ENCODE measurements at regions of chr15 and their contacts with region 1.

Region 1: GRCh38 chr15:69064649-69065048 is 50.2 kb downstream of the NOX5 start:
- DNase-seq: no peak
- H3K4me3 ChIP-seq: no peak overlapping the region
- H3K27ac ChIP-seq: no peak overlapping the region
- H3K4me1 ChIP-seq: no peaks in the 10 kb centered on the region
- H3K27me3 ChIP-seq: no peaks in the 10 kb centered on the region
- CTCF ChIP-seq: no peak

Region 2: DNA sequence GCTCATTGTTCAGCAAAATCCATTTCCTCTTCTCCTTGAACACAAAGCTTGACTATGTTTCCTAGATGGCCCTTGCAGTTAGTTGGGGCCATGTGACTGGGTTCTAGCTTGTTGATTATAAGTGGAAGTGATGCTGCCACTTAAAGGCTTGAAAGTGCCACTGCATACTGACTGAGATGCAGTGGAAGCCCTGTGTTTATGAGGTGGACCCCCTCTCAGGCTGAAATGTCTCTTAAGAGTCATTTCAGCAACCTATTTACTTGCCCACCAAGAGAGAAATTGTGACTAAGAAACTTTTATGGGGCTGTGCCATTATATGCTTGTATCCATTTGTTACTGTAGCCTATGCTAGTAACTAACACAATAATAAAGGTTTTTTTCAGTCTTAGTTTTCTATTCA is 235.6 kb before region 1 on chr15:
- CTCF ChIA-PET with region 1: no interaction called
- dilution Hi-C with region 1: no loop called
- in situ Hi-C with region 1: no loop called
- intact Hi-C with region 1: no loop called
- DNase-seq: peak; percentile 6
- H3K4me3 ChIP-seq: no peak overlapping the region
- H3K27ac ChIP-seq: no peak overlapping the region
- H3K4me1 ChIP-seq: no peaks in the 10 kb centered on the region
- H3K27me3 ChIP-seq: peaks cover 3% of the 10 kb centered on the region
- CTCF ChIP-seq: peak; percentile 12 to 65

Region 3: GRCh38 chr15:69403594-69403993 is 338.9 kb after region 1 on chr15:
- CTCF ChIA-PET with region 1: no interaction called
- dilution Hi-C with region 1: loop called (anchors 10 kb)
- in situ Hi-C with region 1: loop called (anchors 5 to 10 kb)
- intact Hi-C with region 1: no loop called
- DNase-seq: peak; percentile 44
- H3K4me3 ChIP-seq: no peak overlapping the region
- H3K27ac ChIP-seq: no peak overlapping the region
- H3K4me1 ChIP-seq: peaks cover 13% of the 10 kb centered on the region
- H3K27me3 ChIP-seq: no peaks in the 10 kb centered on the region
- CTCF ChIP-seq: no peak